ENCODE measurements at regions of chr17 and their contacts with region 1.

Region 1: DNA sequence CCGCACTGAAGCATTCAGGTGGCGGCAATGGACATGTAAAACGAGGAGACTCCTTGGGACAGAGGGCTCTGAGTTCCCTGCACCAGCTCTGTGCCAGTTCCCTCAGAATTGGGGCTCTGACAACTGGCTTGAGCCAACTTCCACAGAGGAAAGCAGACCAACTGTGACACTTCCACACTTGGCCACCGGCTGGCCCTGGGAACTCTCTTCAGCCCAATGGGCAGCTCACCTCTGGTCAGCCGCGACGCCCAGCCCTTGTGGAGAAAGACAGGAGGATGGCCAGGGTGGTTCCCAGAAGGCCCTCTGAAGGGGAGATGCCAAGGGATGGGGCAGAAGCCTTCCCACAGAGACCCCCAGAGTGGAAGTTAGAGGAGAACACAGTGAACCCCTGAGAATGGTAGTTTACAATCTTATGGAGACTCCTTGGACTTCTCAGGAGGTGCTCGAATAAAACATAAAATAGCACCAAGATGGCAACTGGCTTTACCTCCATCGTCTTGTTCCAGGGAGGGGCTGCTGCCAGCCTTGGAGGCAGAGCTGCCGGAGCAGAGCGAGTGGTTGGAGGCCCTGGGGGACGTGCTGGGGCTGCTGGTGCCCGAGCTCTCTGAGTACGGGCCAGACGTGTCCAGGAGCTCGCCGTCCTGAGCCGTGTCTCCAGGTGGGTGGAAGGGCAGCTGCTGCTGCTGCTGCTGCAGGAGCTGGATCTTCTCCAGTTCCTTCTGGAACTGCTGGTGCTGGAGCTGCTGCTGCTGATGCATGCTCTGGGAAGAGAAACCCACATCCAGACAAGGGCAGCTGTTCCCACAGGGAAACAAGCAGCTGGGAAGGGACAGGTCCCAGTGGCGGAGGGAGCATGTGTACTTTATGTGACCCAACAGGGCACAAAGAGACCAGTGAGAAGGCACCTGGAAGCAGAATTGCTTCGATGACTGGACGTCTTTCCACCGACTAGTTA is 35.0 kb upstream of the ICAM2 start:
- DNase-seq: no peak
- H3K4me3 ChIP-seq: no peak overlapping the region
- H3K4me3 Mint-ChIP-seq: no peak overlapping the region
- H3K27ac ChIP-seq: no peak overlapping the region
- H3K27ac Mint-ChIP-seq: peak overlapping the region in 4 of 7 donors; percentile 45 to 91 (median 72)
- H3K4me1 ChIP-seq: peaks cover 9 to 11% of the 10 kb centered on the region in 2 donors
- H3K4me1 Mint-ChIP-seq: peaks cover 11% of the 10 kb centered on the region
- H3K27me3 ChIP-seq: no peaks in the 10 kb centered on the region
- H3K27me3 Mint-ChIP-seq: peaks cover 0 to 2% (median 0%) of the 10 kb centered on the region in 3 donors
- CTCF ChIP-seq: no peak

Region 2: GRCh38 chr17:64107500-64108235 is 52.2 kb after region 1 on chr17:
- intact Hi-C with region 1: loop called in 1 of 2 experiments (anchors 2 kb)
- DNase-seq: no peak
- H3K4me3 ChIP-seq: no peak overlapping the region
- H3K4me3 Mint-ChIP-seq: no peak overlapping the region
- H3K27ac ChIP-seq: no peak overlapping the region
- H3K27ac Mint-ChIP-seq: no peak overlapping the region
- H3K4me1 ChIP-seq: peaks cover 27 to 29% of the 10 kb centered on the region in 2 donors
- H3K4me1 Mint-ChIP-seq: peaks cover 54% of the 10 kb centered on the region
- H3K27me3 ChIP-seq: no peaks in the 10 kb centered on the region
- H3K27me3 Mint-ChIP-seq: peaks cover 0 to 2% (median 0%) of the 10 kb centered on the region in 3 donors
- CTCF ChIP-seq: no peak

Measured in CD14-positive monocyte (primary cell).